Activated CD8-positive, alpha-beta memory T cell treated with anti-CD3 and anti-CD28 coated beads, Interleukin-2, amount 10 ng/mL, durations not matched to agents 7 days and 5 days (primary cell): ENCODE measurements at regions of chr9 and their contacts with region 1.

Region 1: GRCh38 chr9:109903515-109904138 is 123.6 kb downstream of the PALM2AKAP2 start:
- DNase-seq: peak; percentile 69
- ATAC-seq: peak; percentile 78
- H3K4me3 Mint-ChIP-seq: no peak overlapping the region
- H3K27ac Mint-ChIP-seq: no peak overlapping the region
- H3K4me1 Mint-ChIP-seq: no peaks in the 10 kb centered on the region
- H3K27me3 Mint-ChIP-seq: peaks cover 15% of the 10 kb centered on the region

Region 2: GRCh38 chr9:109880277-109881169 is 23.1 kb before region 1 on chr9:
- CTCF ChIA-PET with region 1: no interaction called
- DNase-seq: peak; percentile 46
- ATAC-seq: peak; percentile 60
- H3K4me3 Mint-ChIP-seq: no peak overlapping the region
- H3K27ac Mint-ChIP-seq: no peak overlapping the region
- H3K4me1 Mint-ChIP-seq: no peaks in the 10 kb centered on the region
- H3K27me3 Mint-ChIP-seq: peaks cover 9% of the 10 kb centered on the region

Region 3: GRCh38 chr9:110058304-110058953 is 154.8 kb after region 1 on chr9:
- CTCF ChIA-PET with region 1: interaction called, 18 read pairs
- DNase-seq: peak; percentile 57
- ATAC-seq: no peak
- H3K4me3 Mint-ChIP-seq: no peak overlapping the region
- H3K27ac Mint-ChIP-seq: no peak overlapping the region
- H3K4me1 Mint-ChIP-seq: peaks cover 4% of the 10 kb centered on the region
- H3K27me3 Mint-ChIP-seq: no peaks in the 10 kb centered on the region

Region 4: DNA sequence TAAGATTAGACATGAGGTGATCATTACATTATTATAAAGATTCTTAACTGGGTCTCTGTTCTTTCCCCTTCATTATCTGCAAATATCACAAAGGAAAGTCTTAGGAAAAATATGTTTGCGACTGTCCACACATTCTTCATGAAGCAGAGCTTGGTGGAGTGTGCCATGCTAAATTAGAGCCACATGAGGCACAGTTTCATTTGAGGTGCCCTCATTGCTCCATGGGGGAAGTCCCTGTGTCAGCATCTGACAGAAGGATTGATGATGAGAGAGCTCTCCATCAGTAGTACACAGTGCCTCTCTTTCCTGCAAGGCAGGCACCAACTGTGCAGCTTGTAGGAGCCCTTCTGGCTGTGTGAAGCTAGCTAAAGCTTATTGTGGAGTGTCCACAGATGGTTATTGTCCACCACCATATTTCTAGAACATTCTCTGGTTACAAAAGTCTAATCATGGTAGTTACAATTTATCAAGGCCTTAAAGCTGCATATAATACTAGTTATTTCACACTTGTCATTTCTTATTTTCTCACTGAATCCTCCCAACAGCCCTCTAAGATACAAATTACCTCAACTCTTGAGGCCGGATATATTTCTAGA is 240.4 kb after region 1 on chr9:
- CTCF ChIA-PET with region 1: interaction called, 13 read pairs
- DNase-seq: peak; percentile 66
- ATAC-seq: peak; percentile 61
- H3K4me3 Mint-ChIP-seq: peak overlapping the region; percentile 10
- H3K27ac Mint-ChIP-seq: peak overlapping the region; percentile 95
- H3K4me1 Mint-ChIP-seq: peaks cover 50% of the 10 kb centered on the region
- H3K27me3 Mint-ChIP-seq: peaks cover 10% of the 10 kb centered on the region

Region 5: DNA sequence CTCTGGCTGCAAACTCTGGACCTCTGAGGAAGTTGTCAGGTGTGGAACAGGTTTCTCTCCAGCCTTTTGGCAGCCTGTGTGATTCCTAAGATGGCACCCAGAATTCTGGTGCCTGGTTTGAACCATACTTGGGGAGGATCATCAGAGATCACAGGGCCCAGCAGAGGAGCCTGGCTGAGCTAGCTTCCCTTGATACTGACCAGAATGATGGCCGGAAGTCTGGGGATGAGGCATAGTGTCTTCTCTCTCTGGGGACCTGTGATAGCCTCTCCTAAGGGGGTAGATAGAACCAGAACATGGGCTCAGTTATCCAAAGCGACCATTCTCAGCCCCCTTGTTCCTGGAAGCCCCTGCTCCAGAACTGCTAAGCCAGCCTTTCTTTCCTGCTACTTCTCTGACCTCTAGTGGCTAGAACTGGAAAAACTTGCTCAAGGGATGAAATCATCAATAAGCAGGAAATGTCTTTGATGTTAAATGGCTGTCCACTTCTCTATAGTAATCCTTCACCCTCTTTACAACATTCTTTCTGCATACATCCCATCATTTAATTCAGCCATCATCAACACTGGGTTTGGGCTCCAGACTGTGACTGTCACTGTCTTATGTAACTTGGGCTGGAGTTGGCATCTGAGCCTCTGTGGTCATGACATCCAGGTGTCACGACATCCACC is 249.2 kb after region 1 on chr9:
- CTCF ChIA-PET with region 1: interaction called, 10 read pairs
- DNase-seq: no peak
- ATAC-seq: peak; percentile 20
- H3K4me3 Mint-ChIP-seq: peak overlapping the region; percentile 29
- H3K27ac Mint-ChIP-seq: peak overlapping the region; percentile 65
- H3K4me1 Mint-ChIP-seq: peaks cover 85% of the 10 kb centered on the region
- H3K27me3 Mint-ChIP-seq: no peaks in the 10 kb centered on the region